Posterior vena cava (tissue), 2 donors: ENCODE measurements at regions of chr19 and their contacts with region 1.

Region 1: DNA sequence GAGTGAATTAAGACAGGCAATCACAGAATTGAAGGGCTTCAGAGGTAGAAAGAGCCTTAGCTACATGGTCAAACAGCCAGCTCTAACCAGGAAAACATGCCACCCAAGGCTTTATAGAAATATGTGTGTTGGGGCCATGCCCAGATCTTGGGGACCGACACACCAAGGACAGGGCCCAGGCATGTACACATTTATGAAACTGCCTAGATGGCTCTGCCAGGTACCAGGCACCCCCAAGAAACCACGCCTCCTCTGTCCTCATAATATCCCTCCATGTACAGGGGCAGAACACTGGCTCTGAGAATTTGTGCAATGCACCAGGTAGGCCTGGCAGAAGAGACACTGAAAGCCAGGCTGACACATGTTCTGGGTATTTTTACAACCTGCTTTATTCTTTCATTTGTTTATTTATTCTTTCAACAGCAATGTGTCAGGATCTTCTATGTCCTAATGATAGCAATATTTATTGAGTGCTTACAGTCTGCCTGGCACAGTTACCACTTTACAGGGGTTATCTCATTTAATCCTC is 137.9 kb upstream of the LSM14A start:
- DNase-seq: no peak

Region 2: DNA sequence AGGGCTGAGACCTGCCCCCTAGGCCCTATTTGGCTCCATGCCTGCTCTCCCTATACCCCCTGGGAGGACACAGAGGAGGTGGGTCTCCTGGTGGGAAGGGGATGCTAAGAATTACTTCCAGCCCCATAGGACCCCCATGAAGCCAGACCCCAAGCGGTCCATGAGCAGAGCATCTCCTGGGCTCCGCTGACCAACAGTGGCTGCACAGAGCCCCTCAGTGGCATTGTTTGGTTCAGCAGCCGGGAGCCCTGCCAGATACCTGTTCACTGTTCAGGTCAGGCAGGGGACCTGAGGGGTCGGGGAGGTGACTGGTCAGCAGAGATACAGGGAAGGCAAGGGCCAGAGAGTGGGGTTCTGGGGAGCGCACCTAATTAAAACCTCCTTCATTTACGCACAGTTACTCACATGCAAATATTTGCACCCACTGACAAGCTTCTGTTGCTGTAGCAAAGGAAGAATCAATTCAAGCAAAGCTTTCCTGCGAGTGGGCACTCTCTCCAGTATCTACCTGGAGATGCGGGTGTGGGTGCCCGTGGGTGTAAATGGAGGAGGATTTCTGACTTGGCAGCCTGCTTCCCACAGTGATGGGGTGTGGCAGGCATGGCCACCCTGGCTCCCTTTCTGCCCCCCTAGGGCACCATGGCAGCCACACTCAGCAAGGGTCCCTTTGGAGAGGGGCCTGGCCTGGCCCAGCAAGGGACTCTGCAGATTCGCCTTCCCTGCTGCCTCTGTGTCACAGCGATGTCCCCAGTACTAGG is 329.1 kb before region 1 on chr19:
- intact Hi-C with region 1: no loop called
- DNase-seq: peak; percentile 60

Region 3: DNA sequence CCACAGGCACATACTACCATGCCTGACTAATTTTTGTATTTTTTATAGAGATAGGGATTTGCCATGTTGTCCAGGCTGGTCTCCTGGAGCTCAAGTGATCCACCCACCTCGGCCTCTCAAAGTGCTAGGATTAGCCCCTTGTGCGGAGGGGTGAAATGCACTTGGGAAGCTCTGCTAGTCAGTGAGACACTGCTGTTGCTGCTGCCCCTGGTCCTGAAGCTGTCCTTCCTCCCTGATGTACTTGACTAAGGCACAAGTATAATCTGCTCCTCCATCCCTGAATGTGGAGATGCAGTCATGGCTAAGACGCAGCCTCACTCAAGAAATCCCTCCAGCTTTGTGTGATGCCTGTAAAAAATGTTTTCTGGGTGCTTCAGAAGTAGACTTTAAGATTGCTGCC is 113.2 kb before region 1 on chr19:
- intact Hi-C with region 1: no loop called
- DNase-seq: no peak

Region 4: GRCh38 chr19:34057155-34057554 is 22.8 kb after region 1 on chr19:
- intact Hi-C with region 1: loop called in 1 of 2 experiments (anchors 2 kb)
- DNase-seq: no peak

Region 5: GRCh38 chr19:34082289-34083077 is 48.1 kb after region 1 on chr19:
- intact Hi-C with region 1: loop called in 1 of 2 experiments (anchors 5 kb)
- DNase-seq: no peak